ENCODE measurements at regions of chr20 and their contacts with region 1.

Region 1: GRCh38 chr20:20466341-20466879 is 98.5 kb downstream of the INSM1 start:
- DNase-seq: peak; percentile 76
- H3K4me3 ChIP-seq: no peak overlapping the region
- CTCF ChIP-seq: no peak

Region 2: DNA sequence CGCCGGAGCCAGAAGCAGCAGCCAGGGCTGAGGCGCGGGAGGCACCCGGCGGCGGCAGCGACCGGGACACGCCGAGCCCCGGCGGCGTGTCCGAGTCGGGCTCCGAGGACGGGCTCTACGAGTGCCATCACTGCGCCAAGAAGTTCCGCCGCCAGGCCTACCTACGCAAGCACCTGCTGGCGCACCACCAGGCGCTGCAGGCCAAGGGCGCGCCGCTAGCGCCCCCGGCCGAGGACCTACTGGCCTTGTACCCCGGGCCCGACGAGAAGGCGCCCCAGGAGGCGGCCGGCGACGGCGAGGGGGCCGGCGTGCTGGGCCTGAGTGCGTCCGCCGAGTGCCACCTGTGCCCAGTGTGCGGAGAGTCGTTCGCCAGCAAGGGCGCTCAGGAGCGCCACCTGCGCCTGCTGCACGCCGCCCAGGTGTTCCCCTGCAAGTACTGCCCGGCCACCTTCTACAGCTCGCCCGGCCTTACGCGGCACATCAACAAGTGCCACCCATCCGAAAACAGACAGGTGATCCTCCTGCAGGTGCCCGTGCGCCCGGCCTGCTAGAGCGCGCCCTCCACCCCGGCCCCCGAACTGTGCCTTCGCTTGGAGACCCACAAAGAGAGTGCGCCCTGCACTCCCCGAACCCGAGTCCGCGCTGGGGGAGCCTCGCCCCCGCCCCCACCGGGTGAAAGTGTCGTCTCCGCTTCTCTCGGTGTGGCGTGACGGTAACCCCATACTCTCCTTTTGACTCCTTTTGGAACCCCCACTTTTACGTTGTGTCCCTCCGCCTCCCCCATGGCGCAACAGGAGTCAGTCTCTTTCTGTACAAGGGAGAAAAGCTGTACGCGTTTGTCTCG is 96.9 kb before region 1 on chr20:
- in situ Hi-C with region 1: loop called (anchors 10 kb)
- DNase-seq: no peak
- H3K4me3 ChIP-seq: no peak overlapping the region
- CTCF ChIP-seq: no peak

Measured in astrocyte of the cerebellum (primary cell).